ENCODE measurements at regions of chr12 and their contacts with region 1.

Region 1: DNA sequence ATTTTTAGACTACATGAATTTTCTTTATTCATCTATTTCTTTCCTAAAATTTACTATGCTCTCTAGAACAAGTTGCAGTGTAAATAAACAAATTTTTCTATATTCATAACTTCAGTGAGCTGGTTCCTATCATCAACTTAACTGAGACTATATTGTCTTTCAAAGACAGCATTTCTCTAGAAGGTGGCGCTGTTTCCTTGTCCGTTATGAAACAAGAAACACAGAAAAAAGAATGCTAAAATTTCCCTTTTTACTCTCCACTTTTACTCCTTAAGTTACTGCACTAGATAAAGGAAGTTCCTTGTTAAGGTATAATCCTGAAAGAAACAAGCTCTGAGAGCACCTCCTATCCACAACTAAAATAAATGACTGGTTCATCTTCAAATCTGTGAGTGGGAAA is 8.2 kb upstream of the CLEC2A start:
- DNase-seq: peak; percentile 25
- ATAC-seq: no peak
- H3K4me3 Mint-ChIP-seq: no peak overlapping the region
- H3K27ac Mint-ChIP-seq: no peak overlapping the region
- H3K4me1 Mint-ChIP-seq: peaks cover 6% of the 10 kb centered on the region
- H3K27me3 Mint-ChIP-seq: peaks cover 2% of the 10 kb centered on the region
- CTCF ChIP-seq: peak; percentile 47

Region 2: DNA sequence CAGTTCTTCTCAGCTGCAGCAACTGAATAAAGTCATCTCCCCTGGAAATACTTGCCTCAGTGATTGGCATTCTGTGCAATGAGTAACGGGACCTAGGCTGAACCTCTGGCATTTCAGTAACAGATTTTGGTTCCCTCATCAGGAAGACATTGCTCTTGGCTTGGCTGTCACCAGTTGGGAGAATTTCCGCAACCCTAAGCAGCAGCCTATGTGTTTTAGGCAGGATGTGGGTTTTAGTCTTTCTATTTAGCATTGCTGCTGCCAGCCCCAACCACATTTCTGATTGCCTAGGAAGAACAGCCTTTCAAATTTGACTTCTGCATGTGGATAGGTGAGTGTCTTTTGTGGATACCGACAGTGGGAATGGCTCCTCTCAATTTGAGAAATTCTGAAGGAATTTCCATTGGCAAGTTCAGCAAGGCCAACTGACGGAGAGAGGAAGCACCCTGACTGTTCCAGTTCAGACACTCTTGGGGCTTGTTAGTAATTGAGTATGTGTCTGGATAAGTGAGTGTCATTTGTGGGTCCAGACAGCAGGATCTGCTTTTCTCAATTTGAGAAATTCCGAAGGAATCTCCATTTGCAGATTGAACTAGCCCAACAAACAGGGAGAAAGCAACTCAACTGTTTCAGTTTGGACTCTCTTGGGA is 10.8 kb after region 1 on chr12:
- CTCF ChIA-PET with region 1: interaction called, 10 read pairs
- POLR2A ChIA-PET with region 1: no interaction called
- intact Hi-C with region 1: no loop called
- DNase-seq: peak; percentile 61
- ATAC-seq: peak; percentile 69
- H3K4me3 Mint-ChIP-seq: peak overlapping the region; percentile 31
- H3K27ac Mint-ChIP-seq: peak overlapping the region; percentile 68
- H3K4me1 Mint-ChIP-seq: peaks cover 40% of the 10 kb centered on the region
- H3K27me3 Mint-ChIP-seq: no peaks in the 10 kb centered on the region
- CTCF ChIP-seq: no peak

Region 3: GRCh38 chr12:10130042-10130441 is 189.7 kb after region 1 on chr12 and contains the start of gene CLEC7A:
- CTCF ChIA-PET with region 1: no interaction called
- POLR2A ChIA-PET with region 1: no interaction called
- intact Hi-C with region 1: loop called (anchors 10 kb)
- DNase-seq: no peak
- ATAC-seq: peak; percentile 89
- H3K4me3 Mint-ChIP-seq: no peak within 1 kb of the TSS
- H3K27ac Mint-ChIP-seq: no peak within 1 kb of the TSS
- H3K4me1 Mint-ChIP-seq: peaks cover 13% of the 10 kb centered on the region
- H3K27me3 Mint-ChIP-seq: peaks cover 10% of the 10 kb centered on the region
- CTCF ChIP-seq: no peak
- total RNA-seq, gene CLEC7A: not detected

Region 4: DNA sequence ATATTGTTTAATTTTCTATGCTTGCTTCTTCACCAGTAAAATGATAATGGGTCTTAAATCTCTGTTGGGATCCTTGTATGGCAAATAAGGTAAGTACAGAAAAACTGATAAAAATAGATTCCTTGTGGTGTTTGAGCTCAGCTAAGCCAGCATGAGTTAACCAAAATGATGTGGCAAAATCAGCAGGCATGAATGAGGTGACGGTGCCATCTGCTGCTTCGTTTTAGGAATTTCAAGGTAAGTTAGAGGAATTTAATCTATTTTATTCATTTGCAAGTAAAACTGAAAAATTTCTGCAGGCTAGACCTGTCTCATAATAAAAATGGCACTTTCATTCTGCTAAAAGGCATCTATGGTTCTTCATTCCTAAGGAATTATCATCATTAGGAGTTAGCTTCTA is 199.6 kb after region 1 on chr12:
- CTCF ChIA-PET with region 1: interaction called, 20 read pairs
- POLR2A ChIA-PET with region 1: no interaction called
- intact Hi-C with region 1: loop called (anchors 10 kb)
- DNase-seq: peak; percentile 66
- ATAC-seq: peak; percentile 49
- H3K4me3 Mint-ChIP-seq: no peak overlapping the region
- H3K27ac Mint-ChIP-seq: no peak overlapping the region
- H3K4me1 Mint-ChIP-seq: peaks cover 2% of the 10 kb centered on the region
- H3K27me3 Mint-ChIP-seq: peaks cover 6% of the 10 kb centered on the region
- CTCF ChIP-seq: peak; percentile 66

Measured in activated CD8-positive, alpha-beta T cell treated with anti-CD3 and anti-CD28 coated beads for 36 hours (primary cell).